SK-N-SH (cell line): ENCODE measurements at regions of chr4 and their contacts with region 1.

Region 1: DNA sequence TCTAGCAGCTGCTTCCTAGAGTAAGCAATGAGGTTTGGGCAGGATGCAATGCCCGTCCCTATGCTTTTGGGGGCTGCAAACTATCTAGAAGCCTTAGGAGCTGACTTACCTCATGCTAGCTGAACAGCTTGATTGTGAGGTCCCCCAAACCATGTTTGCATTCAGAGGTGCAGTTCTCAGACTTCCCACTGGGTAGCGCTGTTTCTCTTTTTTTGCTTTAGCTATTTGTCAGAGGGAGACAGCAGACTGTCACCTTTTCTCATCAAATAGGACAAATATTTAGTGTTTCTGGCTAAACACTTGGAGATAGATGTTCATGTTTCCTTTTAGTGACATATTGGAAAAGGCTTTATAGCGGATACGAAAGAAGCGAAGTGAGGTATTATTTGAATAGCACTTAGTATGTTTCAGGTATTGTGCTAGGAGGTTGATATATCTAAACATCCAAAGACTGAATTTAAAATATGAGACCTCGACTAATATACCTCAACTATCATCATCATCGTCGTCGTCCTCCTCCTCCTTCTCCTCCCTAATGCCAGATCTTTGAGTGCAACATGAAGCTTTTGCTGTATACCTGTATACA is 18.7 kb upstream of the TMEM192 start:
- DNase-seq: peak; percentile 70
- H3K4me3 ChIP-seq: peak overlapping the region in 1 of 2 experiments; percentile 24; a peak in 1 of 4 replicates
- H3K27ac ChIP-seq: no peak overlapping the region
- H3K4me1 ChIP-seq: no peaks in the 10 kb centered on the region
- H3K27me3 ChIP-seq: no peaks in the 10 kb centered on the region; the same call in 1 of the 2 replicates
- CTCF ChIP-seq: peak; percentile 97
- EP300 ChIP-seq: no peak
- RAD21 ChIP-seq: peak; percentile 94

Region 2: DNA sequence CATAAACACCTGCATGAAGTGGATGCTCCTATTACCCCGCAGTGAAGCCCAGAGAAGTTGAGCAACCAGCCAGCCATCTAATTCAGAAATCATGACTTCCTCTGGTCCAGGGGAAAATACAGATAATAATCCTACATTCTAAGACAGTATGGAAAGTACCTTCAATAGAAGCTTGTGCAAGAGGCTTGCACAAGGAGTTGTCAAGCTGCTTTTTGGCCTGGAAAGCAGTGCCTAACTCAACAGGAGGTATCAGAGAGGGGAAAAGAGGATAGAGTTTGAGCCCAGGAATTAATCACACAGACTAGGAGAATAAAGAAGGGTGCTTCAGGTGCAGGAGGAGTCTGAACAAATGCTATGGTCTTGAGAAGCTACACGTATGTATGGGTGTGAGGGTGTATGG is 45.4 kb before region 1 on chr4:
- CTCF ChIA-PET with region 1: no interaction called
- POLR2A ChIA-PET with region 1: no interaction called
- DNase-seq: no peak
- H3K4me3 ChIP-seq: no peak overlapping the region
- H3K27ac ChIP-seq: no peak overlapping the region
- H3K4me1 ChIP-seq: no peaks in the 10 kb centered on the region
- H3K27me3 ChIP-seq: no peaks in the 10 kb centered on the region
- CTCF ChIP-seq: no peak
- EP300 ChIP-seq: no peak
- RAD21 ChIP-seq: no peak

Region 3: DNA sequence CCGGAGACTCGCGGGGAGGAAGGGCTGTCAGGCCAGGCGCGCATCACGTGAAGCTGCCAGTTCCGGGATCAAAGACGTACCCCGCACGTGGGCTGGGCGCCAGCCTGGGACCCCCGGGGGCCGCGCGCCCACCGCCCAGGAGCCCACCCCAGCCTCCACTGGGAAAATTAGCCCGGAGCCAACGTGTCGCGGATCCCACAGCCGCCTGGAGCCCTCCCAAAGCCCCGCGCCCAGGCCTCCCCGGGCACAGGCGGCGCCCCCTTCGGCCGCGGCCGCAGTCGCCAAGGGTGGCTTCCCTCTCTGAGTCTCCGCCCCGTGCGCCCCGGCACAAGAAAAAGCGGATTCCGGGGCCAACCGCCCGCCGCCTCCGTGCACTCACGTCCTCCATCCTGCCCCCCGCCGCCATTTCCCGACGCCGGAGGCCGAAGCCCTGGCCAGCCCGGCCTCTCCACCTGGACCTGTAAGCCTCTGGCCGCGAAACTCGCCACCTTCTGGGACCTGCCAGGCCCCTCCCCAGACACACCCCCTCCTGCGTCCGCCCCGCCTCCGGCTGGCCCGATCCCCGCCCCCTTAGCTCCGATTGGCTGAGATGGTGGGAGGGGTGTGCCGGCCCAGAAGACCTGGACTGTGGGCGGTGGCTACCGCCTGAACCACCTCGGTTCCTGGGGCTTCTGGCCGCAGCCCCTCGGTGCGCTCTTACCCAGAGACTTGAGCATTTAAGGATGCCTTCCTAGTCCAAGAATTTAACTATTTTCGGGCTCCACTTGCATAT is 18.8 kb before region 1 on chr4 and contains the start of gene TMEM192:
- CTCF ChIA-PET with region 1: interaction called, 15 read pairs
- POLR2A ChIA-PET with region 1: no interaction called
- DNase-seq: peak; percentile 98
- H3K4me3 ChIP-seq: peak within 1 kb of the TSS; percentile 63 to 82
- H3K27ac ChIP-seq: peak within 1 kb of the TSS; percentile 65 to 79
- H3K4me1 ChIP-seq: peaks cover 2 to 5% of the 10 kb centered on the region in 2 experiments; a peak in 3 of 4 replicates
- H3K27me3 ChIP-seq: no peaks in the 10 kb centered on the region
- CTCF ChIP-seq: peak; percentile 48
- EP300 ChIP-seq: no peak
- RAD21 ChIP-seq: no peak
- polyA plus RNA-seq, gene TMEM192: 9.1 and 14.4 TPM in 2 replicates

Region 4: DNA sequence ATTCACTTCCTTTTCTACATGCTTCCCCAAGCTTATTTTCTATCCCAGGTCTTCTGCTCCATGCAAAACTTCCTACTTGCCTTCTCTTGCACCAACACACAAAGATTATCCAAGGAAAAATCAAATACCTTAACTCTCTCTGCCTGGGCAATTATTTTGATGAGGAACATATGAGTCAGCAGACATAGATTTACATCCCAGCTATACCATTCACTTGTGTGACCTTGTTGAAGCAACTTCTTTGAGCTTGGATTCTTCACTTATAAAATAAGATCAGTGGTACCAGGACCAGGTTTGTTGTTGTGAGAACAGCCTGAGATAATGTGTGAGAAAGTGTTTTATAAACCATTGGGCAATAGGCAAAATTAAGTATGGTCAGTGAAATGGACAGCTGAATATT is 20.4 kb after region 1 on chr4:
- CTCF ChIA-PET with region 1: interaction called, 11 read pairs
- POLR2A ChIA-PET with region 1: no interaction called
- DNase-seq: no peak
- H3K4me3 ChIP-seq: no peak overlapping the region
- H3K27ac ChIP-seq: peak overlapping the region; percentile 38 to 78; a peak in 2 of 4 replicates
- H3K4me1 ChIP-seq: no peaks in the 10 kb centered on the region
- H3K27me3 ChIP-seq: no peaks in the 10 kb centered on the region
- CTCF ChIP-seq: no peak
- EP300 ChIP-seq: no peak; a peak in 1 of 4 replicates
- RAD21 ChIP-seq: no peak

Region 5: DNA sequence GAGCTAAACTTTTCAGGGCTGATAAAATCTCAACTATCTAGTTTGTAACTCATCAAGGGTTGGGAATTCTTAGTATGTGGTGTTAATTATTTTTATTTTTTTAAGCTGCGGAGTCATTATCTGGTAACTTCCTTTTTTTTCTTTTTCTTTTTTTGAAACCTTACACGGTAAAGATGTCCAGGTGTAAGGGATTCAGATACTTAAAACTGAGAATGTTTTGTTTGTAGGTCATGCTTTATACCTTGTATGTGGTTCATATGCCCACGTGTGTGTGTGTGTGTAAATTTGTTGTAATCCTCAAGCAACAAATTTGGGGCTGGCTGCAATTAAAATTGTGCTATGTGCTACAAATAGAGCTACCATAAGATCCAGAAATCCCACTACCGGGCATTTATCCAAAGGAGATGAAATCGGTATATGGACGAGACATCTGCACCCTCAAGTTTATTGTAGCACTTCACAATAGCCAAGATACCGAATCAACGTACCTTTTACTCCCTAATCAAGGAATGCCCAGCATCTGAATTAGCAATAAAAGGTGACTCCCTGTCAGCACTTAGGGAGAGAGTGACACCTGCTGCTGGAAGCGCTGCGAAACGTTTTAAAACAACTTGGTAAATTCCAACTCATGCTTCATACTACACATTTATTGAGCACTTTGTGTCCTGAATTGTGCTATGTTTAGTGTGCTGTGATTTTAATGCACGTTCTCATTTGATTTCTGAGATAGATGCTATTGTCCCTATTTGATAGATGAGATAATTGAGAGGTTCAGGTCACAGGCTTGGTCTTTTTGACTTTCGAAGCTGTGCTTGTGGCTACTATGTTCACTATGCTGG is 212.2 kb after region 1 on chr4:
- CTCF ChIA-PET with region 1: interaction called, 76 read pairs
- POLR2A ChIA-PET with region 1: no interaction called
- DNase-seq: no peak
- H3K4me3 ChIP-seq: no peak overlapping the region
- H3K27ac ChIP-seq: no peak overlapping the region
- H3K4me1 ChIP-seq: no peaks in the 10 kb centered on the region
- H3K27me3 ChIP-seq: no peaks in the 10 kb centered on the region
- CTCF ChIP-seq: peak; percentile 56
- EP300 ChIP-seq: no peak
- RAD21 ChIP-seq: peak; percentile 67

Region 6: DNA sequence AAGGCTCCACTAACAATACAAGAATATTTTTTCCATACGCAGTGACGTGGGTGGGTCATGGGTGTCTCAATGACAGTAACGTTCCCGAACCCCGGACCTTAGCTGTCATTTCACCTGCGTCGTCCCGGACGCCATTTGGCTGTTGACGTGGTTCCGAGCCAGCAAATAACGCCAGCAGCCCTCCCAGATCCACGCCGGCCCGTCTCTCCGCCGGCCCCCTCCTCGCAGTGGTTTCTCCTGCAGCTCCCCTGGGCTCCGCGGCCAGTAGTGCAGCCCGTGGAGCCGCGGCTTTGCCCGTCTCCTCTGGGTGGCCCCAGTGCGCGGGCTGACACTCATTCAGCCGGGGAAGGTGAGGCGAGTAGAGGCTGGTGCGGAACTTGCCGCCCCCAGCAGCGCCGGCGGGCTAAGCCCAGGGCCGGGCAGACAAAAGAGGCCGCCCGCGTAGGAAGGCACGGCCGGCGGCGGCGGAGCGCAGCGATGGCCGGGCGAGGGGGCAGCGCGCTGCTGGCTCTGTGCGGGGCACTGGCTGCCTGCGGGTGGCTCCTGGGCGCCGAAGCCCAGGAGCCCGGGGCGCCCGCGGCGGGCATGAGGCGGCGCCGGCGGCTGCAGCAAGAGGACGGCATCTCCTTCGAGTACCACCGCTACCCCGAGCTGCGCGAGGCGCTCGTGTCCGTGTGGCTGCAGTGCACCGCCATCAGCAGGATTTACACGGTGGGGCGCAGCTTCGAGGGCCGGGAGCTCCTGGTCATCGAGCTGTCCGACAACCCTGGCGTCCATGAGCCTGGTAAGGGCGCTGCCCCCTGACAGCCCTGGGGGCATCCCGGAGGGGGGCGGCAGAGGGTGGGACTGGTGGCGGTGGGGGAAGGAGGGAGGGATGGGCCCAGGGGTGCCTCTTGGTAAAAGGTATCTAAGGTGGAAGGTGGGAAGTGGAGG is 247.7 kb after region 1 on chr4 and contains the start of gene CPE:
- CTCF ChIA-PET with region 1: interaction called, 20 read pairs
- POLR2A ChIA-PET with region 1: no interaction called
- DNase-seq: peak; percentile 95
- H3K4me3 ChIP-seq: peak within 1 kb of the TSS; percentile 63 to 72
- H3K27ac ChIP-seq: peak within 1 kb of the TSS in 1 of 2 experiments; percentile 86; a peak in 2 of 4 replicates
- H3K4me1 ChIP-seq: peaks cover 0 to 14% of the 10 kb centered on the region in 2 experiments; a peak in 2 of 4 replicates
- H3K27me3 ChIP-seq: no peaks in the 10 kb centered on the region; the same call in 1 of the 2 replicates
- CTCF ChIP-seq: peak; percentile 38; the same call in 1 of the 2 replicates
- EP300 ChIP-seq: no peak
- RAD21 ChIP-seq: peak; percentile 51
- polyA plus RNA-seq, gene CPE: 18.2 and 25.9 TPM in 2 replicates

Region 7: GRCh38 chr4:165464813-165465381 is 333.6 kb after region 1 on chr4:
- CTCF ChIA-PET with region 1: interaction called, 38 read pairs
- POLR2A ChIA-PET with region 1: no interaction called
- DNase-seq: peak; percentile 54
- H3K4me3 ChIP-seq: peak overlapping the region in 1 of 2 experiments; percentile 12; a peak in 1 of 4 replicates
- H3K27ac ChIP-seq: no peak overlapping the region
- H3K4me1 ChIP-seq: peaks cover 0 to 3% of the 10 kb centered on the region in 2 experiments; a peak in 1 of 4 replicates
- H3K27me3 ChIP-seq: no peaks in the 10 kb centered on the region; the same call in 1 of the 2 replicates
- CTCF ChIP-seq: peak; percentile 90
- EP300 ChIP-seq: no peak
- RAD21 ChIP-seq: peak; percentile 96